ENCODE measurements at regions of chr9 and their contacts with region 1.

Region 1: GRCh38 chr9:127611899-127612790 is at the start of gene STXBP1:
- DNase-seq: peak; percentile 91 to 93
- ATAC-seq: peak; percentile 88 to 92 (median 90)
- H3K4me3 ChIP-seq: peak within 1 kb of the TSS; percentile 95
- H3K27ac ChIP-seq: peak within 1 kb of the TSS; percentile 87
- H3K4me1 ChIP-seq: peaks cover 32% of the 10 kb centered on the region
- H3K27me3 ChIP-seq: no peaks in the 10 kb centered on the region
- CTCF ChIP-seq: no peak
- total RNA-seq, gene STXBP1: 6.1 to 12.3 (median 8.9) TPM

Region 2: GRCh38 chr9:127673234-127673633 is 61.1 kb after region 1 on chr9:
- intact Hi-C with region 1: loop called in 1 of 2 experiments (anchors 5 kb)
- DNase-seq: no peak
- ATAC-seq: no peak
- H3K4me3 ChIP-seq: no peak overlapping the region
- H3K27ac ChIP-seq: no peak overlapping the region
- H3K4me1 ChIP-seq: peaks cover 4% of the 10 kb centered on the region
- H3K27me3 ChIP-seq: no peaks in the 10 kb centered on the region
- CTCF ChIP-seq: no peak

Region 3: DNA sequence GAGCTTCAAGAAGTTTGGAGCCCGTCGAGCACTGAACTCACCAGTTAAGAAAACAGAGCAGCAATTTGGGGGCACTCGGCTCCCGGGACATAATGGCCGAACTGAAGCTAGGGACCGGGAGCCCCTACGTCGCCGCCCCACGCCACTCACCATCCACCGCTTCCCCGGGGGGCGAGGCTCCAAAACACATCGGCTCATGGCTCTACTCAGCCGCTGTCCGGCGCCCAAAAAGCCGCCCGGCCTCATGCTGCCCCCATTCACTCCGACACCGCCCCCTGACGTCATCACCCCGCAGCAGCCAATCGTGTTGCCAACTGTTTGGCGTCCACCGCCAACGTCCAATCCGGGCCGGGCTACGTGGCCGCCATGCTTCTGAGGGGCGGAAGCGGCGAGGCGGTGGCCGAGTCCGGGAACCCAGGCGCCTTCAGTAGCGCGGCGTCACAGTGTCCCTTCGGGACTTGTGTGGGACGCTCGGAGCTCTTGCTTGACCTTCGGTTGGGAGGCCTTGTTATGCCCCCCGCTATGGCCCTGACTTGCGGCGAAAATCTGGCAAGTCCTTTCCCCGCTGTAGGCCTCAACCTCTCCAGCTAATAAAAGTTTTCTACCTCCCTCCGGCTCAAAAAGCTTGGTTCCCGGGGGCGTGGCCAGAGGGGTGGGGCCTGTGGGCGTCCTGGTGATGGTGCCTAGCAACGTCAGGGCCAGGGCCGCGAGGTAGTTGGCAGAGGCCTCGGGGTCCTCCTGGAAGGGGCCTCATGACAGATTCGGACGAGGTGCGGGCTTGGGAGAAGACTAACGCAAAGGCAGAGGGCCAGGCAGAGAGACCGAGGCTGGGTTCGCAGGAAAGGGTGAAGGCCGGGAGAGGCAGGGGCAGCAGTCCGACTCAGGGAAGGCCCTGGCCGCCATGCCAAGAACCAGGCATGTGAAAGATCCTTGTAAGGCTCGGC is 103.5 kb after region 1 on chr9 and contains the starts of genes PTRH1 and TTC16:
- intact Hi-C with region 1: loop called in 1 of 2 experiments (anchors 5 kb)
- DNase-seq: peak; percentile 98 to 99
- ATAC-seq: peak; percentile 96 to 98 (median 96)
- H3K4me3 ChIP-seq: peak within 1 kb of the TSS; percentile 85
- H3K27ac ChIP-seq: peak within 1 kb of the TSS; percentile 91
- H3K4me1 ChIP-seq: peaks cover 15% of the 10 kb centered on the region
- H3K27me3 ChIP-seq: no peaks in the 10 kb centered on the region
- CTCF ChIP-seq: no peak
- total RNA-seq, gene PTRH1: 7.9 to 37.7 (median 13.3) TPM
- total RNA-seq, gene TTC16: 0.10 TPM in 1 of 4 donors, not detected in the others

Measured in psoas muscle (tissue), 8 donors.